Posterior cingulate gyrus (tissue), 11 donors: ENCODE measurements at regions of chr2 and their contacts with region 1.

Region 1: DNA sequence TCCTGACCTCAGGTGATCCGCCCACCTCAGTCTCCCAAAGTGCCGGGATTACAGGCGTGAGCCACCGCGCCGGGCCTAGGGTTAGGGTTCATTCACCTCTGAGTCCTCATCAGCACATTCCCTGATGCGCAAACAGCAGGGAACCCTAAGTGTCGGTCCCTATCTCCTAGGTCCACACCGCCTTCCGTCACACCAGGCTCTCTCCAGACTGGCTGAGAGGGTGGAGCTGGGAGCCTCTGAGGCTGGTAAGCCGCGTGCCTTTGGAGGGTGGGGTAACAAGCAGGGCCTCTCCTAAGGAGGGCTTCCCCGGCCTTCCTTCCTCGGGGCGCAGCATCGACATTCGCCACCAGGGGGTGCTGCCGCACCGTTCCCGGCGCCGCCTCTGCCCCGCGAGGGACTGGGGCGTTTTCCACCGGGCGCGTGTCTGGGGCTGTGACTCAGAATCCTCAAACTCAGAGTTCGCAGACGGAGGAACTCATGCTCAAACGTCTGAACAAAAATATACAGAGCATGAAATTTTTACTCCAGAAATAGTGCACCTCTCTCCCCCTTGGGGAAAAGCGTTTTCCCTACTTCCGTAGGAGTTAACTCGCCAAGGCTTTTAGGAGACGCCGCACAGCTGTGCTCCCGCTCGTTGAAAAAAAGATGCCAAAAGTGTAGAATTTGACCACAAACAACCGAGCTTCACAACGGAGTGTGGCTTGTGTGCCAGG is 63.9 kb upstream of the ASAP2 start:
- DNase-seq: peak; percentile 73 to 97 (median 88)

Region 2: GRCh38 chr2:8939486-8940114 is 203.1 kb before region 1 on chr2:
- intact Hi-C with region 1: no loop called
- DNase-seq: no peak

Region 3: GRCh38 chr2:9003616-9004337 is 138.9 kb before region 1 on chr2 and contains the start of gene MBOAT2:
- intact Hi-C with region 1: loop called (anchors 5 kb)
- DNase-seq: peak; percentile 80 to 98 (median 86)

Region 4: GRCh38 chr2:9333591-9334171 is 191.0 kb after region 1 on chr2:
- intact Hi-C with region 1: loop called (anchors 2 kb)
- DNase-seq: peak in 6 of 10 donors; percentile 47 to 93 (median 52)

Region 5: DNA sequence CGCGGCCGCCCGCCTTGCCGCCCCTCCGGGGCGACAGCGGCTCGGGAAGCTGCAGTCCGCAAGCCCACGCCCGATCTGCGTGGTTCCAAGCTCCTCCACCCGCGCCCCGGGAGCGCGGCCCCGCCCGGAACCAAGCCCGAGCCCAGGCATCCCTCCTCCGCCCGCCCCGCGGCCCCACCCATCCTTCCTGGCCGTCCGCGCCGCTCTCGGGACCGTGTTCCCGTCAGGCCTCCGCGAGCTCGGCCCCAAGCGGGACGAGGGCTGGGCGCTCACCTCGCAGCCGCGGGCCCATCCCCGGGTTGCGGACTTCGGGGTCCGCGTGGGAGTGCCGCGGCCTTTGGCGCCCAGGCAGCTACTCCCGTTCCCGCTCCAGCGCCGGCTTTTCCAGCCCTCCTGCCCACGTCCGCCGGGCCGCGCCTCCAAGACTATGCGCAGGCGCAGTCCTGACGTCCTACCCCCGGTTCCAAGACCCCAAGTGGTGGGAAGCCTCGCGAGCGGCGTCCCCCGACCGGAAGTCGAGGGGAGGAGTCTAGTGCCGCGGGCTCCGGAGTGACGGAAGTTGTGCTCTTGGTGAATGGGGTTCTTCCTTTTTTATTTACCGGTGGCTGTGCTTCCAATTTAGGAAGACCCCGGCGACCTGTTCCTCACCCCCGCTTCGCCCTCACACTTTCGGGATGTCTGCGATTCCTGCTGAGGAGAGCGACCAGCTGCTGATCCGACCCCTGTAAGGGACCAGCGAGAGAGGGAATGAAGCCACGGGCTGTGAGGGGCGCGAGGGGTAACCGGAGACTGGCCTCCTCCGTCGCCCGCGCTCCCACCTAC is 280.6 kb after region 1 on chr2 and contains the starts of genes CPSF3 and ITGB1BP1:
- intact Hi-C with region 1: loop called (anchors 5 kb)
- DNase-seq: peak; percentile 95 to 100 (median 96)

Region 6: GRCh38 chr2:9675415-9676351 is 533.0 kb after region 1 on chr2:
- intact Hi-C with region 1: no loop called
- DNase-seq: peak in 1 of 10 donors; percentile 24